ENCODE measurements at regions of chr16 and their contacts with region 1.

Region 1: DNA sequence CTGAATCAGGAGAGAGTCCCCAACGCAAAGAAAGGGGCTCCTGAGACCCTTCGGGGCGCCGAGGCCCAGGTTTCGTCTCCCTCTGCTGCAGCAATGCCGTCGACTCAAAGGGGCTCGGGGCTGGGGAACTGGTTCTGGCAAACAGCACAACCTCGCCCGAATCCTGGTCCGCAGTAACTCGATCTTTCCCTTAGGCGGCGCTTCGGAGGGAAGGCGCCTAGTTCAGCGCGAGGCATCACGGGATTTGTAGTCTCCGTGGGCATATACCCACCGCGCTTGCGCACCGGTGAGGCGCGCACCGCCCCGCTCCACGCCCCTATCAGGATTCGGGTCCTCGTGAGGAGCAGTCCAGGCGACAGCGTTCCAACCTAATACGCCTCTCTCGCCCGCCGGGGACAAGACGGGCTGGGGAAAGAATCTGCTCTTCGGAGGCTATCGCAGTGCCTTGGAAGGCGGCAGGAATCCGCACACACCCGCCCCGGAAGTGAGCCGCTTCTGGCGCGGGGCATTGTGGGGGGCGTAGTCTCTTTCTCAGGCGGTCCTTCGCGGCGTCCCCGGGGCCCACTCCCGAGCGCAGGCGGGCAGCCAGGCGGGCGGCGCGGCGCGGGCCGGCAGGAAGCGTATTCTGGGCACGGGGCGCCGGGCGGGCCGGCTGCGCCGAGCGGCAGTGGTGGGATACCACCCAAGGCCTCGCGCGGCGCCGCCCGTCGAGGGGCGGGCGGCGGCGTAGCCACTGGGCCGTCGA is at the start of gene THAP11:
- DNase-seq: peak; percentile 90
- H3K4me3 ChIP-seq: peak within 1 kb of the TSS; percentile 60 to 80 (median 74)
- H3K27ac ChIP-seq: peak within 1 kb of the TSS; percentile 77
- H3K4me1 ChIP-seq: peaks cover 34% of the 10 kb centered on the region
- H3K27me3 ChIP-seq: no peaks in the 10 kb centered on the region
- CTCF ChIP-seq: peak; percentile 85 to 89
- total RNA-seq, gene THAP11: 11.7 to 13.1 TPM

Region 2: DNA sequence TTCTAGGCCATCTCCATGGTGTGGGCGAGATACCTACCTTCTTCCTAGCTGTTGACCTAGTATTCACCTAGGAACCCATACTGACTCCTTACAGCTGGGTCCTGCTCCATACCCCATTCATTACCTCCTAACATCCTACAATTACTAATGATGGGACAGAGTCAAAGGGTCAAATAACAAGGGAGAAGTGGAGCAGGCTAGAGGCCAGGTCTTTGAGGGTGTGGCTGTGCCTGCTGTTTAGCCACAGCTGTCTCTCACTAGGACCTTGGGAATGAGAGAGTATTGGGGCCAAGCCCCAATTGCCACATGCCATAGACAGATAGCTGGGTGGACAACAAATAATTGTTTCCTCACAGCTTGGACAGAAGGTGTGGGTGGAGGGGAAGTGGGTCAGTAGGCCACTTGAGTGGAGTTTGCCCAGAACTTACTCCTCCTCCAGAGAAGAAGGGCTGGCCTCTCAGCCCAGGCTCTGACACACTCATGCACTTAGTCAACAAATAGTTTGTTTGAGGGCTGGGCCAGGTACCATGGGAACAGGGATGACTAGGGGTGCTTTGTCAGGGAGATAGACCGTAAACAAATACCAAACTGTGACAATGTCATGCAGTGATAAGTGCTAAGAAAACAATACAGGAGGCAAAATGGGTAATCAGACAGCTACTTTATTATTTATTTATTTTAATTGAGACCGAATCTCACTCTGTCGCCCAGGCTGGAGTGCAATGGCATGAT is 15.7 kb after region 1 on chr16:
- CTCF ChIA-PET with region 1: interaction called, 5 read pairs
- dilution Hi-C with region 1: no loop called
- in situ Hi-C with region 1: no loop called
- intact Hi-C with region 1: loop called (anchors 1 kb)
- DNase-seq: peak; percentile 96
- H3K4me3 ChIP-seq: no peak overlapping the region
- H3K27ac ChIP-seq: peak overlapping the region; percentile 93
- H3K4me1 ChIP-seq: peaks cover 32% of the 10 kb centered on the region
- H3K27me3 ChIP-seq: no peaks in the 10 kb centered on the region
- CTCF ChIP-seq: no peak

Region 3: DNA sequence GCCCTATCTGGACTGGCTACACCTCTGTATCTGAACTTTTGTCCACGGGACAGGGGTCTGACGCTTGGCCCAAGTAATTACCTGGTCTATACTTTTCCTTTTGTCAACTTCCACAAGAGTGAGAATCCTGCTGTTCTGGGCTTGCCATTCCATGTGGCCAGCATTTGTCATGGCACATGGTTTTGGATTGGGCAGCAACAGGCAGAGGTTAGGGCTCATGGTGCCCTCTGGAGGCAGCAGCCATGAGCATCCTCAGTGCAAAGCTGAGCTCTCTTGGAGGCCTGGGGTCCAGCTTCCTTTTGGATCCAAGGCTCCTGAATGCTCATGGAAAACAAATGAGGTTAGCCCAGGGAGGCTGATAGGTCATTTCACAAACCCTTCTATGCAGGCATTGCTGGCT is 23.4 kb after region 1 on chr16:
- CTCF ChIA-PET with region 1: interaction called, 5 read pairs
- dilution Hi-C with region 1: no loop called
- in situ Hi-C with region 1: no loop called
- intact Hi-C with region 1: loop called (anchors 2 kb)
- DNase-seq: peak; percentile 34
- H3K4me3 ChIP-seq: no peak overlapping the region
- H3K27ac ChIP-seq: no peak overlapping the region
- H3K4me1 ChIP-seq: peaks cover 22% of the 10 kb centered on the region
- H3K27me3 ChIP-seq: no peaks in the 10 kb centered on the region
- CTCF ChIP-seq: peak; percentile 34 to 65

Region 4: GRCh38 chr16:67872786-67873537 is 31.0 kb after region 1 on chr16 and contains the start of gene EDC4:
- CTCF ChIA-PET with region 1: no interaction called
- dilution Hi-C with region 1: no loop called
- in situ Hi-C with region 1: no loop called
- intact Hi-C with region 1: loop called (anchors 2 kb)
- DNase-seq: peak; percentile 74
- H3K4me3 ChIP-seq: peak within 1 kb of the TSS; percentile 55 to 86 (median 67)
- H3K27ac ChIP-seq: peak within 1 kb of the TSS; percentile 51
- H3K4me1 ChIP-seq: peaks cover 21% of the 10 kb centered on the region
- H3K27me3 ChIP-seq: no peaks in the 10 kb centered on the region
- CTCF ChIP-seq: no peak
- total RNA-seq, gene EDC4: 31.5 to 53.9 TPM

Measured in mammary epithelial cell (primary cell).